ENCODE measurements at regions of chr2 and their contacts with region 1.

Region 1: GRCh38 chr2:101026923-101027469 is 24.9 kb downstream of the RPL31 start:
- DNase-seq: no peak
- H3K4me3 ChIP-seq: no peak overlapping the region
- H3K27ac ChIP-seq: no peak overlapping the region
- H3K4me1 ChIP-seq: no peaks in the 10 kb centered on the region
- H3K27me3 ChIP-seq: no peaks in the 10 kb centered on the region
- CTCF ChIP-seq: no peak

Region 2: DNA sequence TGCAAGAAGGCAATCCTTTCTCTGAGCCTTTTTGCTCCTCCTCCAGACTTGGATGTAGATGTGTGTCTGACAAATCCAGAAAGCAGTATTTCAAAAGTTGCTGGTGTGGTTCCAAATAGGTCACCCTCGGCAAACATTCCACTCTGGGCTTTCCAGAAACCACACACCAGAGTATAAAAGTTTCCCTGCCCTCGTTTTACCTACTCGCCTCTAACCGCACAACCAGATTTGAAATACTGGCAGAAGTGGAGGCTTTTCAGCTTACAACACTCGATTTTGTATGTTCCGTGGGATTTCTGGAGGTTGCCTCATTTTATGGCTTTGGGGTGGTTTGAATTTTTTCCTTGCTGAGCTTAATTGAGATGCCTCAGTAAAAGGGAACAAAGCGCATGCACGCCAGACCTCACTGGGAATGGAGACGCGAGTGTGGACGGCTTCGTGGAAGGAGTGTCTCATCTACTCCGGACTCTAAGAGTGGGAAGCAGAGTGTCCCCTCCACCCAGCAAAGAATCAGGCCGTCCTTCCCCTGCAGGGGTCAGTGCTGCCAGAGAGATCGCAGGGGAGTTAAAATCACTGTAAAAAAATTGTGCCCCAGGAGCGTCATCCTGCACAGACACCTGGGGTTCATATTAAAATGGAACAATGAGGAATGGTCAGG is 68.9 kb before region 1 on chr2:
- CTCF ChIA-PET with region 1: no interaction called
- POLR2A ChIA-PET with region 1: no interaction called
- intact Hi-C with region 1: no loop called
- DNase-seq: peak; percentile 48 to 54
- H3K4me3 ChIP-seq: no peak overlapping the region
- H3K27ac ChIP-seq: peak overlapping the region; percentile 70
- H3K4me1 ChIP-seq: peaks cover 18% of the 10 kb centered on the region; the same call in 1 of the 2 replicates
- H3K27me3 ChIP-seq: no peaks in the 10 kb centered on the region
- CTCF ChIP-seq: no peak

Region 3: GRCh38 chr2:100976645-100977391 is 50.2 kb before region 1 on chr2:
- CTCF ChIA-PET with region 1: no interaction called
- POLR2A ChIA-PET with region 1: no interaction called
- intact Hi-C with region 1: no loop called
- DNase-seq: no peak
- H3K4me3 ChIP-seq: no peak overlapping the region
- H3K27ac ChIP-seq: no peak overlapping the region
- H3K4me1 ChIP-seq: no peaks in the 10 kb centered on the region
- H3K27me3 ChIP-seq: no peaks in the 10 kb centered on the region
- CTCF ChIP-seq: no peak

Region 4: DNA sequence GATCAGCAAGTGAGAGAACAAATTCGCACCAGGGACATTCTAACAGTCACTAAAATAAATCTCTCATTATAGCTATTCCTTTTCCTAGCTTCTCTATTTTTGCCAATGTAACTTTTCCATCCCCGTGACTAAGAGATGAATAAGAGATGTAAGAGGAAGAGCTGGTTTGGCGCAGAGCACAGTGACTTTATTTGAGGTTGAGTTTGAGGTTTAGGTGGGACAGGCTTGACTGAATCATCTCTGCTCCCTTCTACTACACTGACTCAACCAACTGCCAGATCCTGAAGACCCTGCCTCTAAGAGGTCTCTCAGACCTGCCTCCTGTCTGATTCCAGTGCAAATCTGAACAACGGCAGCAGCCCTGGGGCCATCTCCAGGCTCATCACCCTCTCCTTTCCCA is 419.9 kb after region 1 on chr2:
- CTCF ChIA-PET with region 1: no interaction called
- POLR2A ChIA-PET with region 1: interaction called, 10 read pairs
- intact Hi-C with region 1: no loop called
- DNase-seq: no peak
- H3K4me3 ChIP-seq: no peak overlapping the region
- H3K27ac ChIP-seq: peak overlapping the region; percentile 25; the same call in 1 of the 2 replicates
- H3K4me1 ChIP-seq: peaks cover 18% of the 10 kb centered on the region
- H3K27me3 ChIP-seq: no peaks in the 10 kb centered on the region
- CTCF ChIP-seq: no peak

Measured in PC-9 (cell line).